ENCODE measurements at regions of chr7 and their contacts with region 1.

Region 1: GRCh38 chr7:30814700-30815387 is 43.6 kb downstream of the MINDY4 start:
- DNase-seq: peak; percentile 64
- ATAC-seq: peak; percentile 62

Region 2: GRCh38 chr7:30148951-30149471 is 665.8 kb before region 1 on chr7:
- intact Hi-C with region 1: no loop called
- DNase-seq: no peak
- ATAC-seq: no peak

Region 3: GRCh38 chr7:30671793-30672465 is 142.9 kb before region 1 on chr7:
- intact Hi-C with region 1: no loop called
- DNase-seq: no peak
- ATAC-seq: peak; percentile 48

Region 4: GRCh38 chr7:30750683-30751650 is 63.9 kb before region 1 on chr7:
- intact Hi-C with region 1: no loop called
- DNase-seq: peak; percentile 88
- ATAC-seq: peak; percentile 65

Region 5: GRCh38 chr7:30893357-30893756 is 78.5 kb after region 1 on chr7:
- intact Hi-C with region 1: loop called (anchors 10 kb)
- DNase-seq: peak; percentile 73
- ATAC-seq: peak; percentile 61

Region 6: DNA sequence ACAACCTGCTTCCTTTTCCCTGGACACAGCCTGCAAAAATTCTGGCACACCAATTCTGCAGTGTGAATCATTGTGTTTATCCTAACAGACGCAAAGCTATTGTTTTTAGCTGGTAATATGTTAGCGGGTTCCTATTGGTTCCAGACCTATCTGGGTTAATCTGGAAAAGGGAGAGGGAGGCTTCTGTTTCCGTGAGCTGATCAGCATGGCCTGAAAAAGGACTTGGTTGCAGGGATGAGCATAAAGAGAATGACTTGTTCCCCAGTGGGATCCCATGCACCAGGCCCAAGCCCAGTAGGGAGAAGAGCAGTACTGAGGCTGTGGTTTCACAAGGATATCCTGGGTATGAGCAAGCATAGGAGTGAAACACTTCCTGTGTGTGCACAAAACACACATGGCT is 1177.0 kb after region 1 on chr7:
- intact Hi-C with region 1: no loop called
- DNase-seq: no peak
- ATAC-seq: peak; percentile 5

Measured in Right ventricle myocardium superior (tissue), 1 donor.